CD8-positive, alpha-beta T cell (primary cell): ENCODE measurements at regions of chr1 and their contacts with region 1.

Region 1: DNA sequence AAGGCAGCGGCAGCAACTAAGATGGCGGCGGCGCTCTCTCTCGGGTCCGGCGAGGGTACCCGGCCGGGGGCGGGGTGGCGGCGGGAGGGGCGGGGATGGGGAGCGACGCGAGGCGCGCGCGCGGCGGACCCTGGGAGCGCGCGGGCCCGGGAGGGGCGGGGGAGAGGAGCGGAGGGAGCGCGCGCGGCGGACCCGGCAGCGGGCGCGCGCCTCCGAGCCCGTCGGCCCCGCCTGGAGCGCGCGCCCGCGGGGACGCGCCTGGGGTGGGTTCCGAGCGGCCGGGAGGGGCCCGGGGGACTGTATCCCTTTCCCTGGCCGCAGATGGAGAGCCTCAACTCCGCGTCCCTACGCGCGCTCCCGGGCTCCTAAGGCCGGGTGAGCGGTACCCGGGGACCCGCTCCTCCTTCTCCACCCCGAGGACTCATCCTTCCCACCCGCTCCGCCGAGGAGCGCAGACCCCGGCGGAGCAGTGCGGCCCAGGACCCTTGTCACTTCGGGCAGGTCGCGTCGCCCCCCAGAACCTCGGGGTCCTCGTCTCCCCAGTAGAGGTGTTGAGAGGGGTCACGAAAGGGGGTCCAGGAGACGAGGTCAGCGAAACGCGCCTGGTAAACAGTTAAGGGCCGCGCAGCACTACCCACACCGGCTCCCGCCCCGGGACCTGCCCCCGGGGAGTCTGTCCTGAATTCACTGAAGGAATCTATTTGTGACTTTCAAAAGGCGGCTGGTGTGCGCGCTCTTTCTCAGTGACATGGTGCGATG is at the start of gene CLSTN1:
- DNase-seq: peak; percentile 76 to 93 (median 91)
- ATAC-seq: peak; percentile 72
- H3K4me3 ChIP-seq: peak within 1 kb of the TSS; percentile 58 to 72
- H3K4me3 Mint-ChIP-seq: peak within 1 kb of the TSS; percentile 96
- H3K27ac ChIP-seq: peak within 1 kb of the TSS; percentile 37 to 76
- H3K27ac Mint-ChIP-seq: peak within 1 kb of the TSS; percentile 89
- H3K4me1 ChIP-seq: peaks cover 36% of the 10 kb centered on the region
- H3K4me1 Mint-ChIP-seq: peaks cover 43% of the 10 kb centered on the region
- H3K27me3 ChIP-seq: no peaks in the 10 kb centered on the region
- H3K27me3 Mint-ChIP-seq: no peaks in the 10 kb centered on the region
- CTCF ChIP-seq: no peak
- total RNA-seq, gene CLSTN1: 50.0 to 51.1 TPM

Region 2: GRCh38 chr1:9539165-9539828 is 284.8 kb before region 1 on chr1 and contains the start of gene SLC25A33:
- CTCF ChIA-PET with region 1: no interaction called
- POLR2A ChIA-PET with region 1: no interaction called
- intact Hi-C with region 1: loop called (anchors 2 to 5 kb)
- DNase-seq: peak; percentile 91 to 99 (median 96)
- ATAC-seq: peak; percentile 99
- H3K4me3 ChIP-seq: peak within 1 kb of the TSS; percentile 62 to 68
- H3K4me3 Mint-ChIP-seq: peak within 1 kb of the TSS; percentile 90
- H3K27ac ChIP-seq: peak within 1 kb of the TSS; percentile 59 to 83
- H3K27ac Mint-ChIP-seq: peak within 1 kb of the TSS; percentile 91
- H3K4me1 ChIP-seq: peaks cover 19% of the 10 kb centered on the region
- H3K4me1 Mint-ChIP-seq: peaks cover 33% of the 10 kb centered on the region
- H3K27me3 ChIP-seq: no peaks in the 10 kb centered on the region
- H3K27me3 Mint-ChIP-seq: no peaks in the 10 kb centered on the region
- CTCF ChIP-seq: no peak
- total RNA-seq, gene SLC25A33: 10.1 to 11.2 TPM

Region 3: DNA sequence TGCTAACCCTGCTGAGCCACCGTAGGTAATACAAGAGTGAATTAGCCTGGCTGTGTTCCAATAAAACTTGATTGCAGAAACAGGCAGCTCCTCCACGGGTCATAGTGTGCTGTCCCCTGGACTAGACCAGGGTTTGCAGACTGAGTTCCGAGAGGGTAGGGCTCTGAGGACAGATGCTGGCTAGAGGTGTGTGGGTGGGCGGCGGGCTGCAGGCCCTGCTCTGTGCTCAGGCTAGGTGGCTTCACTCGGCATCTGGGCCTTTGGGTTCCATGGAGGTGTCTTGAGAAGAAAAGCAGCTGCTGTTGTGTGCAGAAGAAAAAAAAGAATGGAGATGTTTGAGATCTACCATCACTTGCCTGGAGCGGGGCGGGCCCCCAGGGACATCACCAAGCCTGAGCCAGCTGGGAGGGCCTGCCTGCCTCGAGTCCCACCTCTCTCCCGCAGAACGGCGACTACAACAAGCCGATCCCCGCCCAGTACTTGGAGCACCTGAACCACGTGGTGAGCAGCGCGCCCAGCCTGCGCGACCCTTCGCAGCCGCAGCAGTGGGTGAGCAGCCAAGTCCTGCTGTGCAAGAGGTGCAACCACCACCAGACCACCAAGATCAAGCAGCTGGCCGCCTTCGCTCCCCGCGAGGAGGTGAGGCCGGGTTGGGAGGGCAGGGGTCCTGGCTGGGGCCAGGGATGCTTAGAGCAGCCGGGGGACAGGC is 227.6 kb before region 1 on chr1:
- CTCF ChIA-PET with region 1: no interaction called
- POLR2A ChIA-PET with region 1: no interaction called
- intact Hi-C with region 1: no loop called
- DNase-seq: no peak
- ATAC-seq: no peak
- H3K4me3 ChIP-seq: no peak overlapping the region
- H3K4me3 Mint-ChIP-seq: no peak overlapping the region
- H3K27ac ChIP-seq: no peak overlapping the region
- H3K27ac Mint-ChIP-seq: no peak overlapping the region
- H3K4me1 ChIP-seq: peaks cover 9% of the 10 kb centered on the region
- H3K4me1 Mint-ChIP-seq: peaks cover 9% of the 10 kb centered on the region
- H3K27me3 ChIP-seq: no peaks in the 10 kb centered on the region
- H3K27me3 Mint-ChIP-seq: no peaks in the 10 kb centered on the region
- CTCF ChIP-seq: no peak

Region 4: DNA sequence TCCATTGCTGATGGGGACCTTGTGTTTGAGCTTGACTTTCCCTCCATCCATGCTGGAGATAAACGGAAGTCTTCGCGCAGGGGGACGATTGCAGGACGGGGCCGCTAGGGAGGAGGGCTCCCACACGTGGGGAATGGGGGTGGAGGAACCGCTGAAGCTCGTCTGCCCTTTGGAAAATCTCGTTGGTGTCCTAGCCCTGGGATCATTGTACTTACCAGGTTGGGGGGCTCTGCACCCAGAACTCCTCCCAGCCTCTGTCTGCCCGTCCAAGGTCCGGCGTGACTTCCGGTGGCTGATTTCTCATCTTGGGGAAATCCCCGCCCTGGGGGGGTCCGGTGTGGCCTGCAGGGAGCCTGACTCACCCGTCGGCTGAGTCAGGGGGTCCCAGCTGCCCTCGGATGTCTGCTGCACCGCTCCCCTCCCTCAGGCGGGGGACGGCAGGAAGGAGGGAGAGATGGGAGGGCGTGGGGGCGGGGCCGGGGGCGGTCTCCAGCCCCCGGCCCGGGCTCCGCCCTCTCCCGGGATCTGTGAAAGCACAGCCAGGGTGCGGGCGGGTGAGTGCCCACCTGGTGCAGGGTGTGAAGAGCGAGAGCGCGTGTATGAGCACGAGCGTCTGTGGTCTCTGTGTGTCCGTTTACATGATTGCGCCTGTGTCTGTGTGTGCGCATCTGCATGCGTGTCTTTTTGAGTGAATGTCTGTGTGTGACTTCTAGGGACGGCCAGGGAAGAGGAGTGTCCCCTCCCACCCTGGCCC is 136.8 kb before region 1 on chr1:
- CTCF ChIA-PET with region 1: no interaction called
- POLR2A ChIA-PET with region 1: no interaction called
- intact Hi-C with region 1: no loop called
- DNase-seq: peak; percentile 16 to 87 (median 75)
- ATAC-seq: peak; percentile 47
- H3K4me3 ChIP-seq: peak overlapping the region; percentile 55 to 72
- H3K4me3 Mint-ChIP-seq: peak overlapping the region; percentile 81
- H3K27ac ChIP-seq: peak overlapping the region; percentile 33 to 78
- H3K27ac Mint-ChIP-seq: peak overlapping the region; percentile 82
- H3K4me1 ChIP-seq: peaks cover 80% of the 10 kb centered on the region
- H3K4me1 Mint-ChIP-seq: peaks cover 71% of the 10 kb centered on the region
- H3K27me3 ChIP-seq: no peaks in the 10 kb centered on the region
- H3K27me3 Mint-ChIP-seq: no peaks in the 10 kb centered on the region
- CTCF ChIP-seq: no peak